Adrenal gland (tissue), 19 donors: ENCODE measurements at regions of chr1 and their contacts with region 1.

Region 1: GRCh38 chr1:67500413-67500959 is 70.3 kb upstream of the SERBP1 start:
- DNase-seq: peak; percentile 81 to 94 (median 88)
- H3K4me3 ChIP-seq: no peak overlapping the region
- H3K27ac ChIP-seq: no peak overlapping the region
- H3K4me1 ChIP-seq: no peaks in the 10 kb centered on the region
- H3K27me3 ChIP-seq: no peaks in the 10 kb centered on the region
- CTCF ChIP-seq: peak; percentile 94 to 99 (median 97)
- POLR2A ChIP-seq: no peak

Region 2: DNA sequence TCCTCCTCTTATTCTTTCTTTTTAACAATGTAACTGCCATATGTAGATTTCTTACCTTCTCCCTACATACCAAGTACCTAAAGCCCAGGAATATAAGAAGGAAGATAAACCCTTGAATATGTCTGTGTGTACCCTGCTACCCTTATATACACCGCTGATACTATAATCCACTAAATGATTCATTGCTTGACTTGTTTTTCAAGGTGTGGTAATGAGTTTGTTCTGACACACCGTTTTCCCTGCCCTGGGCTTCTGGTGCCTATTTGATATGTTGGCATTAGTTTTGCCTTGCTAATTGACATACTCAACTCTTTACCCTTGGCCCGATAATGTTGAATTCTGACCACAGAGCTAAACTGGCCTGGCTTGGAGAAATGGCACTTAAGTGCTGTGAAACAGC is 269.9 kb before region 1 on chr1:
- intact Hi-C with region 1: loop called (anchors 5 kb)
- DNase-seq: no peak
- H3K4me3 ChIP-seq: no peak overlapping the region
- H3K27ac ChIP-seq: no peak overlapping the region
- H3K4me1 ChIP-seq: no peaks in the 10 kb centered on the region
- H3K27me3 ChIP-seq: no peaks in the 10 kb centered on the region
- CTCF ChIP-seq: no peak
- POLR2A ChIP-seq: no peak

Region 3: DNA sequence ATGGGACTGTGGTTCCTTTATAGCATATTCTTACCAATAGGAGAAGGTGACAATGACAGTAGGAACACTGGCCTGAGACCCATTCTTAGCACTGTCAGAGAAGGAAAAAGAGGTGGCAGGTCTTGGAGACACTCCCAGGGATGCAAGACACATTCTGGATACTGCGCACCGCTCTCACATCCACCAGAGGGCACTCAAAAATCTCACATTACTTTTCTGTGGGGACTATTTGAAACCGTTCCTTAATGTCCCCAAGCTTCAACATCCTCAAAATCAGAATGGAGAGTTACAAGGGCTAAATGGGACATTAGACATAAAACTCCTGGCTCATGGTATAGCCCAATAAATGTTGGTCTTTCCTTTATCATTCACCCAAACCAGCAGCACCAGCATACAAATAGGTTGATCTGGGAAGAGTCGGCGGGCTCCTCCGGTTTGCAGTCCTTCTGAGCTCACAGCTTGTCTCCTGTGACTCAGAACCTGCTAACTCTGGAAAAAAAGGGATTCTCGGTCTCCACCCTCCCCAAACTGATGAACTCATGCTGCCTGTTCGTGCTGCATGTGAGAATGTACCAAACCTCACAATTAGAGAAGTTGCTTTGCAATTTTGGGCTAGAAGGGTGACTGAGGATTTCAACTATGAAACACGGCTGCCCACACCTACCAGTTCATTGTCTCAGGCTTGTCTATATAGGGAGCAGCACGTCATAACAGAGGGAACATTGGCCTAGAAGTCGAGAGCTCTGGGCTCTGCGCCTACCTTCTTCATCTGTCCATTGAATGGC is 152.6 kb before region 1 on chr1:
- intact Hi-C with region 1: loop called (anchors 5 kb)
- DNase-seq: peak in 6 of 7 donors; percentile 35 to 70 (median 52)
- H3K4me3 ChIP-seq: no peak overlapping the region
- H3K27ac ChIP-seq: no peak overlapping the region
- H3K4me1 ChIP-seq: no peaks in the 10 kb centered on the region
- H3K27me3 ChIP-seq: no peaks in the 10 kb centered on the region
- CTCF ChIP-seq: peak; percentile 47 to 75 (median 70)
- POLR2A ChIP-seq: no peak

Region 4: GRCh38 chr1:67441183-67441582 is 59.3 kb before region 1 on chr1:
- intact Hi-C with region 1: no loop called
- DNase-seq: peak; percentile 76 to 90 (median 85)
- H3K4me3 ChIP-seq: no peak overlapping the region
- H3K27ac ChIP-seq: peak overlapping the region in 2 of 5 donors; percentile 6 to 31
- H3K4me1 ChIP-seq: peaks cover 11 to 16% of the 10 kb centered on the region in 2 donors
- H3K27me3 ChIP-seq: no peaks in the 10 kb centered on the region
- CTCF ChIP-seq: no peak
- POLR2A ChIP-seq: no peak